ENCODE measurements at regions of chr3 and their contacts with region 1.

Region 1: DNA sequence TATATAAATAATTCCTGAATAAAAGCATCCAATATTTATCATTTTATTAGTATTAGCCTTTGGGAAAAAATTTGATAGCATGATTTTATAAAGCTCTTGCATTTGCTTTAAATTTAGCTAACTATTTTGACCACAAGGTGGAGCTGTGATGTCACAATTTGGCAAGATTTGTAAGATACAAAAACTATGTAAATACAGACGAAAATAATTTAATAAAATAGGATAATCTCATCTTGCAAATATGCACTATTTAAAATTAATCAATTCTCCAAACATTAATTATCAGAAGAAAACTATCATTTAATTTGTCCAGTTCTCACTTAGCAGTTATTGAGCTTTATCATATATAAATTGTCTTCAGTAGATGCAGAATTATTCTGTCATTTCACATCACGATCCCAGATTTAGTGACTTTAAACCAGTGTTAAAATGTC is 95.4 kb downstream of the PLOD2 start:
- DNase-seq: no peak
- ATAC-seq: no peak

Region 2: GRCh38 chr3:146189519-146190173 is 124.1 kb after region 1 on chr3:
- intact Hi-C with region 1: loop called (anchors 1 kb)
- DNase-seq: no peak
- ATAC-seq: peak; percentile 59

Region 3: GRCh38 chr3:146339349-146339748 is 273.8 kb after region 1 on chr3:
- intact Hi-C with region 1: no loop called
- DNase-seq: no peak
- ATAC-seq: no peak